ENCODE measurements at regions of chr5 and their contacts with region 1.

Region 1: GRCh38 chr5:121962347-121962670 is 534 bp downstream of the SRFBP1 start:
- DNase-seq: no peak
- ATAC-seq: peak; percentile 67
- H3K4me3 ChIP-seq: peak overlapping the region; percentile 88
- H3K27ac ChIP-seq: peak overlapping the region; percentile 92
- H3K4me1 ChIP-seq: no peaks in the 10 kb centered on the region; the same call in 1 of the 2 replicates
- H3K27me3 ChIP-seq: no peaks in the 10 kb centered on the region
- CTCF ChIP-seq: no peak
- EP300 ChIP-seq: no peak
- POLR2A ChIP-seq: no peak
- RAD21 ChIP-seq: no peak

Region 2: GRCh38 chr5:121949867-121950266 is 12.4 kb before region 1 on chr5:
- CTCF ChIA-PET with region 1: interaction called, 26 read pairs
- POLR2A ChIA-PET with region 1: no interaction called
- RAD21 ChIA-PET with region 1: interaction called, 10 read pairs
- SMC1A ChIA-PET with region 1: interaction called, 19 read pairs
- in situ Hi-C with region 1: no loop called
- intact Hi-C with region 1: no loop called
- DNase-seq: no peak
- ATAC-seq: peak; percentile 60
- H3K4me3 ChIP-seq: no peak overlapping the region
- H3K27ac ChIP-seq: no peak overlapping the region
- H3K4me1 ChIP-seq: no peaks in the 10 kb centered on the region
- H3K27me3 ChIP-seq: no peaks in the 10 kb centered on the region
- CTCF ChIP-seq: peak; percentile 41 to 68 (median 49); a peak in 5 of 6 replicates
- EP300 ChIP-seq: no peak
- POLR2A ChIP-seq: no peak
- RAD21 ChIP-seq: peak; percentile 79

Region 3: DNA sequence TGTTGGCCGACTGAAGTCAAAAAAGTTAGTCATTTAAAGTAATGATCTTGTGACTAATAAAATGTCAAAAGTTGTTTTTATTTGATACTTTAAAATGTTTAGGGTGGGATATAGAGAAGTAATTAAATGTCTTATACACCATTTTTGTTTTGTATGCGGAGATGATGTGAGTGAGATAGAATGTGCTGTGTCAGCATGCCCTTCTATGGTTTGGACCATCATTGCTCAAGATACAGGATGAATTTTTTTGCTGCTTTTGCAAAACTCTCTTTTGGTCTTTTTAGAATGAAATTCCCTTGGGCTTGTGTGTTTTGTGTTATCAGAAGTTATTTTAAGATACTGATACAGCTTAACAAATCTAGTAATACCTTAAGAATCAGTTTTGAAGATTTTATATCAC is 12.0 kb after region 1 on chr5:
- CTCF ChIA-PET with region 1: interaction called, 4 read pairs
- POLR2A ChIA-PET with region 1: interaction called, 6 read pairs
- RAD21 ChIA-PET with region 1: interaction called, 5 read pairs
- SMC1A ChIA-PET with region 1: interaction called, 23 read pairs
- in situ Hi-C with region 1: no loop called
- intact Hi-C with region 1: no loop called
- DNase-seq: no peak
- ATAC-seq: no peak
- H3K4me3 ChIP-seq: no peak overlapping the region
- H3K27ac ChIP-seq: no peak overlapping the region
- H3K4me1 ChIP-seq: peaks cover 3% of the 10 kb centered on the region; the same call in 1 of the 2 replicates
- H3K27me3 ChIP-seq: no peaks in the 10 kb centered on the region
- CTCF ChIP-seq: no peak
- EP300 ChIP-seq: no peak
- POLR2A ChIP-seq: no peak
- RAD21 ChIP-seq: no peak

Region 4: DNA sequence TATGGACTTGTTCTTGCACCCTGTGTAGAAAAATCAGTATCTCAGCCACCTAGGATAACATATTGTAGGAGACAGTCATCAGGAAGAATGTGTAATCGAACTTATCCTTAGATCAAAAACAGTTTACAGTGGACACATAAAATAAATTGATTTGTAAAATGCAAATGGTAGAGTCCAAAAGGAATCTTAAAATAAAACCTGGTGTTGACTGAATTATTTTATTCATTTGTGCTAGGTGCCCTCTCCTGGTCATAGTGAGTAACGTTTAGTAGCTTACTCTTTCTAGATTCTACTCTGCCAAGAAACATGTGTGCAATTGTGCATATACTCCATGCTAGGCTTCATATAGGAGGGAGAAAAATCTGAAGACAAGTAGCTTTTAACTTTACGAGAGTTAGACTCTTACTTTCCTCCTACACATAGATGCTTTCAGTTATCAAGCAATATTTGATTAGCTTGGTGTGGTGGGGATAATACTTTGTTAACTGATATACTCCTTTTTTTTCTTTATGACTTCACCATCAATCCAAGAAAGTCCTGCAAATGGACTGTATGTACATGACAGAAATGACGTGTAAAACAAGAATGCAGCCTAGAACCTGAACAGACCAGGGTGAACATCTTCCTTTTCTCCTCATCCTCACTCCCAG is 139.5 kb after region 1 on chr5:
- CTCF ChIA-PET with region 1: interaction called, 13 read pairs
- POLR2A ChIA-PET with region 1: no interaction called
- RAD21 ChIA-PET with region 1: interaction called, 5 read pairs
- SMC1A ChIA-PET with region 1: interaction called, 3 read pairs
- in situ Hi-C with region 1: no loop called
- intact Hi-C with region 1: loop called (anchors 2 kb)
- DNase-seq: no peak
- ATAC-seq: peak; percentile 83
- H3K4me3 ChIP-seq: no peak overlapping the region
- H3K27ac ChIP-seq: no peak overlapping the region
- H3K4me1 ChIP-seq: no peaks in the 10 kb centered on the region
- H3K27me3 ChIP-seq: no peaks in the 10 kb centered on the region
- CTCF ChIP-seq: peak; percentile 47 to 54 (median 50)
- EP300 ChIP-seq: no peak
- POLR2A ChIP-seq: no peak
- RAD21 ChIP-seq: peak; percentile 75

Region 5: DNA sequence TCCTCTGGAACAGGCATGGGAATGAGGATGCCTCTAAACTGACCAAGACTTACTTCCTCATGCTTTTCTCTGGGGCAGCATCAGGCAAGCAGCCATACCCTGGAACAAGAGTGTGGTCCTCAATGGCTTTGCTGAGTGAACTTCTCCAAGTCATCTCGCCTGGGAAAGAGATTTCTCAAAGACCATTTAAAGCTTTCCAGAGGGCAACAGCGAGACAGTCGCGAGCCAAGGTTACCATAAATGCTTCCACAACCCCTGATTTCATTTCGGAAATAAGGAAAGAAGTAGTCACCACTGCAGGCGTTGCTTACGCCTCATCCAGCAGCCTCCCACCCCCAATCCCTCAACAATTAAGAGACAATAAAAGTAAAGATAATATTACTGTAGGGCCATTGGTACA is 348.6 kb after region 1 on chr5:
- CTCF ChIA-PET with region 1: no interaction called
- POLR2A ChIA-PET with region 1: no interaction called
- RAD21 ChIA-PET with region 1: no interaction called
- SMC1A ChIA-PET with region 1: no interaction called
- in situ Hi-C with region 1: no loop called
- intact Hi-C with region 1: no loop called
- DNase-seq: no peak
- ATAC-seq: no peak
- H3K4me3 ChIP-seq: no peak overlapping the region
- H3K27ac ChIP-seq: no peak overlapping the region
- H3K4me1 ChIP-seq: no peaks in the 10 kb centered on the region
- H3K27me3 ChIP-seq: peaks cover 2 to 12% of the 10 kb centered on the region in 2 experiments
- CTCF ChIP-seq: no peak
- EP300 ChIP-seq: no peak
- POLR2A ChIP-seq: no peak
- RAD21 ChIP-seq: no peak

Measured in GM12878 (cell line).